Activated CD4-positive, alpha-beta T cell treated with anti-CD3 and anti-CD28 coated beads, Interleukin-2, amount 10 ng/mL, durations not matched to agents 24 days and 14 days (primary cell): ENCODE measurements at regions of chr7 and their contacts with region 1.

Region 1: GRCh38 chr7:99408379-99409191 is at the starts of genes BUD31 and PDAP1:
- DNase-seq: peak; percentile 99
- H3K4me3 Mint-ChIP-seq: peak within 1 kb of the TSS; percentile 94
- H3K27ac Mint-ChIP-seq: peak within 1 kb of the TSS; percentile 97
- H3K4me1 Mint-ChIP-seq: peaks cover 35% of the 10 kb centered on the region
- H3K27me3 Mint-ChIP-seq: no peaks in the 10 kb centered on the region
- total RNA-seq, gene BUD31: 136 and 147 TPM in 2 replicates
- total RNA-seq, gene PDAP1: 167 and 168 TPM in 2 replicates

Region 2: DNA sequence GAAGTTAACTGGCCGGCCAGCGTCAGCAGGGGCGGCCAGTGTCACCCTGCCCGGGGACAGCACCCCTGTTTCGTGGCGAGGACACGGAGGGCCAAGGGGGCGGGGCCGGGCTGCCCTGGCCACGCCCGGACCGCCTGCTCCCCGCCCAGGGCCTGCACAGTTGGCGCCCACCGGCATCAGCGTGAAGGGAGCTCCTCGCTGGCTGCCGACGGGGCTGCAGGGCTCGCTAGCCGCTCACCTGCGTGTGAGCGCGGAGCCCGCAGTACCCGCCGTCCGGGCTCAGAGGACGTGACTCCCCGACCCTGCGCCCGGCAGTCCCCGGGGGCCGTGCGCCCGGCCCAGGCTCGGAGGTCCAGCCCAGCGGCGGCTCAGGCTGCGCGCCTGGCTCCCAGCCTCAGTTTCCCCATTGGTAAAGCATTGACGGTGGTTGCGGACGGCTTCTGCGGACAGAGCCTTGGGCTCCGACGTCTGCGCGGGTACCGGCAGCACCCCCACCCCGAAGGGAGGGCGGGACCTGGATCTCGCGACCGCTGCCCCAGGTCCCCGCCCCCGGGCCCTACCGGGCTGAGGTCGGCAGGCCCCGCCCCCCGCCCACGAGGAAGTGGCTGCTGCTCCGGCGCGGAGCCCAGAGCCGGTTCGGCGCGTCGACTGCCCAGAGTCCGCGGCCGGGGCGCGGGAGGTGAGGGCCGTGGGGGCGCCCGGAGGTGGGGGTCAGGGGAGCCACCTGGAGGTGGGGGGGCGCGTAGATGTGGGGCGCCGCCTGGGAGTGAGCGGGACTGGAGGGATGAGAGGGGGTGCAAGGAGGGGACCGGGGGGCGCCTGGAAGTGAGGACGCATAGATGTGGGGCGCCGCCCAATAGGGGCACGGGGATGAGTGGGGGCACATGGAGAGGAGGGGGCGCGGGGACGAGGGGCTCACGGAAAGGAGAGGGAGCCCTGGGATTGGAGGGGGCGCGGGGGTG is 34.2 kb before region 1 on chr7 and contains the start of gene ARPC1B:
- intact Hi-C with region 1: loop called (anchors 5 kb)
- DNase-seq: peak; percentile 94
- H3K4me3 Mint-ChIP-seq: peak within 1 kb of the TSS; percentile 82
- H3K27ac Mint-ChIP-seq: peak within 1 kb of the TSS; percentile 84
- H3K4me1 Mint-ChIP-seq: peaks cover 32% of the 10 kb centered on the region
- H3K27me3 Mint-ChIP-seq: no peaks in the 10 kb centered on the region
- total RNA-seq, gene ARPC1B: 248 and 250 TPM in 2 replicates

Region 3: DNA sequence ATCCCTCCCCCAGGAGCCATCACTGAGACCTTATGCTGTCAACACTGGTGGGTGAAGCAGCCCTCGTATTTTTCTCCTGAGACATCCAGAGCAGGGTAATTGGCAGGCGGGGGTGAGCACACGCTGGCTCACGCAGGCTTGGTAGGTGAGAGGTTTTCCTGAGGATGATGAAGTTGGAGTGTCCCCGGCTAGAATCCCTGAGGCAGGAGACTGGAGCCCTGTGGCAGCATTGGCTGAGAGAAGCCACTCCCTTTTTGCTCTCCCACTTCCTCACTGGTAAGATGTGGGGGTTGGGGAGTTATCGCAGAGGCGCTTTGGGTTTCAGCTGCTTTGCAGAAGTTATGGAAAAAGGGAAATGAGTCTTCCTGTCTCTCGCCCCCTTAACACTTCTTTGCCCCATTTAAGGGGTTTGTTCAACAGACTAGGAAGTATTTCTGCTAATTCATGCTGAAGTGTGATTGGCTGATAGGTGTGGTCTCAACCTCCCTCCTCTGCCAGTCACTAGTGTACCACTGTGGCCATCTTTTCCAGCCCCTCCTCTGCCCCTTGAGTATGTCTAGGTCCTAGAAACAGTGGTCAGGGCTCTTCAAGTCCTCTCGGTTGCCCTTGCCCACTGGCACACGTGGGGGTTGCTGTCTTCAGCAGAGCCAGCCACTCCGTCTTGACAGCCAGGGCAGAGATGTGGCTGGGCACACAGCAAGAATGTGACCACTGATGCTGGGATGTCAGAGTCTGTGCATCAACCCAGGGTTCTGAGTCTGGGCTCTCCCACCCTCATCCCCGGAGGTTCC is 28.4 kb before region 1 on chr7:
- intact Hi-C with region 1: loop called (anchors 1 kb)
- DNase-seq: peak; percentile 83
- H3K4me3 Mint-ChIP-seq: peak overlapping the region; percentile 77
- H3K27ac Mint-ChIP-seq: peak overlapping the region; percentile 90
- H3K4me1 Mint-ChIP-seq: peaks cover 44% of the 10 kb centered on the region
- H3K27me3 Mint-ChIP-seq: no peaks in the 10 kb centered on the region

Region 4: GRCh38 chr7:99393355-99393944 is 15.1 kb before region 1 on chr7:
- intact Hi-C with region 1: no loop called
- DNase-seq: no peak
- H3K4me3 Mint-ChIP-seq: peak overlapping the region; percentile 69
- H3K27ac Mint-ChIP-seq: peak overlapping the region; percentile 79
- H3K4me1 Mint-ChIP-seq: peaks cover 14% of the 10 kb centered on the region
- H3K27me3 Mint-ChIP-seq: no peaks in the 10 kb centered on the region

Region 5: DNA sequence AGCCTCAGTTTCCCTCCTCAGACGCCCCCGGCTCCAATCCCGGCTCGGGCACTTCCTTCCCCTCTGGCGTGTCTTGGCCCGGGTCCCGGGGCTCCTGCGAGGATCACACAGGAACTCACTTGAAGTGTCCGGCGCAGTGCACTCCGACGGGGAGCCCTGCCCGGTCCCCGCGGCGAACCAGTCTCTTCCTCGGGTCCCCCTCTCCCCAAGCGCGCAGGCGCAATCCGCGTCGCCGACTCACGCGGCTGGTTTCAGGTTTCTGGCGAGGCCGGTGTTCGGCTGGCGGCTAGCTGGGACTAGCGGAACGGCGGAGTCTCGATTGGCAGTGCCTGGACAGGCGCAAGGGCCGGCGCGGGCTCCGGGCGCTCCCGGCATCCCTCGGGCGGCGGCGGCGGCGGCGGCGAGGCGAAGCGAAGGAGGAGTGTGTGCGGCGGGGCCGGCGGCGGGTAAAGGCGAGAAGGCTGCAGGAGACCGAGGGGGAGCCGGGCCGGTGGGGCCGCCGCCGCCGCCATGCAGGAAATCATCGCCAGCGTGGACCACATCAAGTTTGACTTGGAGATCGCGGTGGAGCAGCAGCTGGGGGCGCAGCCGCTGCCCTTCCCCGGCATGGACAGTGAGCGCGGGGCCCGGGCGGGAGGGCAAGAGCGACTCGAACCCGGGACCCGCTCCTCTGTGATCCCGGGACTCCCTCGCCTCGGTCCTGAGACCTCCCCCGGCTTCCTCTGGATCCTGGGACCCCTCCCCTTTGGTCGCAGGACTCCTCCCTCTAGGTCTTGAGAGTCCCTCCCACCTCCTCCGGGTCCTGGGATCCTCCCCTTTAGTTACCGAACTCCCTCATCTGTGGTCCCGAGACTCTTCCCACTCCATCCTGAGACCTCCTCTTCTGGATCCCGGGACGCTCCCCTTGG is 30.2 kb after region 1 on chr7 and contains the starts of genes CPSF4 and PTCD1:
- intact Hi-C with region 1: loop called (anchors 1 kb)
- DNase-seq: peak; percentile 97
- H3K4me3 Mint-ChIP-seq: peak within 1 kb of the TSS; percentile 96
- H3K27ac Mint-ChIP-seq: peak within 1 kb of the TSS; percentile 89
- H3K4me1 Mint-ChIP-seq: peaks cover 23% of the 10 kb centered on the region
- H3K27me3 Mint-ChIP-seq: no peaks in the 10 kb centered on the region
- total RNA-seq, gene CPSF4: 83.5 and 89.0 TPM in 2 replicates
- total RNA-seq, gene PTCD1: 10.5 and 10.7 TPM in 2 replicates

Region 6: GRCh38 chr7:99472561-99473243 is 64.1 kb after region 1 on chr7 and contains the start of gene ZNF789:
- intact Hi-C with region 1: loop called (anchors 2 kb)
- DNase-seq: peak; percentile 99
- H3K4me3 Mint-ChIP-seq: peak within 1 kb of the TSS; percentile 100
- H3K27ac Mint-ChIP-seq: peak within 1 kb of the TSS; percentile 93
- H3K4me1 Mint-ChIP-seq: peaks cover 28% of the 10 kb centered on the region
- H3K27me3 Mint-ChIP-seq: peaks cover 1% of the 10 kb centered on the region
- total RNA-seq, gene ZNF789: 22.6 and 23.6 TPM in 2 replicates

Region 7: DNA sequence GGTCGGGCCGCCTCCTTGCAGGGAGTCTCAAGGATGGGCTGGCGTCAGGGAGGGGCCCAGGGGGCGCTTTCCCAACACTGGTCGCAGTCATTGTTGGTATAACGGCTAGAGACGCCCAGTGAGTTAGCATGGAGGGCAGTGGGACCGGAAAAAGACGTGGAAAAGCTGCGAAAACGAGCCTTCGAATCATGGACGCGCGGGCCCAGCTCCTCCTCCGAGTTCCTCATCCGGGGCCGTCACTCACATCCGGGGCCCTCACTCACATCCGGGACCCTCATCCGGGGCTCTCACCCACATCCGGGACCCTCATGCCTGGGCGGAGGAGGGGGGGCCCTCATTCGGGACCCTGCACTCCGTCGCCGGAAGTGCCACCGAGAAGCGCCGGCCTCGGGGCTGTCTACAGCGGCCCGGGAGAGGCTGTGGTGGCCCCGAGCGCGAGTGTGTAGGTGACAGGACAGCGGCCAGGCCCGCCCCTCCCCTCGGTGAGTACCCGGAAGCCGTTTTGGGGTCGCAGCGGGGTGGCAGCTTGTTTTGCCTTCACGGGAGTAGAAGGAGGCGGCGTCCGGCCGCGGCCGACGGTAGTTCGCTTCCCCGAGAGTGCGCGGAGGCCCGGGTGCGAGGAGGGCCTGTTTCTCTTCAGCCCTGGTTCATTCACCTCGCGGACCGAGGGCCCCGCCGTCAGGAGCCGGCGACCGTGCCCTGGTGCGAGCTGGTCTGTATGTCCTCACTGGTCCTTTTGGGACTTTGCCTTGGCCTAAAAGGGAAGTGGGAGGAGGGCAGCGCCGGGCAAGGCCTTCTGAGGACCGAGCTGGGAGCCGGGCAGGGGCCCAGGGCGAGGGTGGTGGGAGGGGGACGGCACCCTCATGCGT is 150.0 kb after region 1 on chr7 and contains the start of gene ZNF655:
- intact Hi-C with region 1: loop called (anchors 2 kb)
- DNase-seq: peak; percentile 97
- H3K4me3 Mint-ChIP-seq: peak within 1 kb of the TSS; percentile 100
- H3K27ac Mint-ChIP-seq: peak within 1 kb of the TSS; percentile 99
- H3K4me1 Mint-ChIP-seq: peaks cover 40% of the 10 kb centered on the region
- H3K27me3 Mint-ChIP-seq: no peaks in the 10 kb centered on the region
- total RNA-seq, gene ZNF655: 76.2 and 76.4 TPM in 2 replicates